ENCODE measurements at regions of chr6 and their contacts with region 1.

Region 1: GRCh38 chr6:26249957-26250697 is 114.9 kb upstream of the BTN3A2 start:
- DNase-seq: peak; percentile 88
- ATAC-seq: peak; percentile 67
- H3K4me3 ChIP-seq: peak overlapping the region; percentile 68 to 90 (median 83)
- H3K4me3 Mint-ChIP-seq: peak overlapping the region; percentile 97
- H3K27ac ChIP-seq: peak overlapping the region; percentile 73 to 74
- H3K27ac Mint-ChIP-seq: peak overlapping the region; percentile 97
- H3K4me1 ChIP-seq: peaks cover 8 to 16% of the 10 kb centered on the region in 2 donors
- H3K4me1 Mint-ChIP-seq: peaks cover 43% of the 10 kb centered on the region
- H3K27me3 ChIP-seq: no peaks in the 10 kb centered on the region
- H3K27me3 Mint-ChIP-seq: no peaks in the 10 kb centered on the region
- CTCF ChIP-seq: peak; percentile 70

Region 2: DNA sequence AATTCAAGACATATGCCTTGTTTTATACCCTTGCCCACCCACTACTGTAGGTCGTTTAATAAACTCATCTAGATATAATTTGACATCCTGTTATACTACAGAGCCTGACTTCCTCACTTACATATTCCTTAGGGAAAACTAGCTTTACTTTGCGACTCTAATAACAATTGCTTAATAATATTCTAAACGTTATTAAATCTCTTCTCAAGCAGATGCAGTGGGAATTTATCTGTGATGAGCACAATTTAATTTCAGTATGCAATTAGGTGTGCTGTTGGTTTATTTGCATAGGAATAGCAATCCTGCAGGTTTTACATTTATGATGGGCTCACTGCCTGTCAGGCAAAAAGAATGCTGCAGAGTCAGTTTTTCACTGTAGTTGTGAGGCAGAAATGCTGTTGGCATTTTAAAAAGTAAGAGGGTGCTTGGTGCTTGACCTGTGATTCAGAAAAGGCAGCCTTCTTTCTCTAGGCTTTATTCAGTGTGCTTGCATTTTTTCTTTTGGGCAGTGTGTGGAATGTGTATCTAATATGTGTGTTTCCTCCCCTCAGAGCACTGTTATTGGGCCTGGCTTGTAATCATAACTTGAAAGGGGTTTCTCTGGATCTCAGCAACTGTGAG is 750.4 kb before region 1 on chr6:
- CTCF ChIA-PET with region 1: no interaction called
- POLR2A ChIA-PET with region 1: no interaction called
- intact Hi-C with region 1: no loop called
- DNase-seq: no peak
- ATAC-seq: no peak
- H3K4me3 ChIP-seq: no peak overlapping the region
- H3K4me3 Mint-ChIP-seq: no peak overlapping the region
- H3K27ac ChIP-seq: no peak overlapping the region
- H3K27ac Mint-ChIP-seq: no peak overlapping the region
- H3K4me1 ChIP-seq: no peaks in the 10 kb centered on the region
- H3K4me1 Mint-ChIP-seq: no peaks in the 10 kb centered on the region
- H3K27me3 ChIP-seq: no peaks in the 10 kb centered on the region
- H3K27me3 Mint-ChIP-seq: no peaks in the 10 kb centered on the region
- CTCF ChIP-seq: no peak

Region 3: GRCh38 chr6:26045065-26045927 is 204.8 kb before region 1 on chr6:
- CTCF ChIA-PET with region 1: no interaction called
- POLR2A ChIA-PET with region 1: interaction called, 11 read pairs
- intact Hi-C with region 1: no loop called
- DNase-seq: peak; percentile 90
- ATAC-seq: peak; percentile 58
- H3K4me3 ChIP-seq: peak overlapping the region; percentile 56 to 98 (median 69)
- H3K4me3 Mint-ChIP-seq: peak overlapping the region; percentile 87
- H3K27ac ChIP-seq: peak overlapping the region; percentile 85 to 89
- H3K27ac Mint-ChIP-seq: peak overlapping the region; percentile 99
- H3K4me1 ChIP-seq: peaks cover 14 to 29% of the 10 kb centered on the region in 2 donors
- H3K4me1 Mint-ChIP-seq: peaks cover 17% of the 10 kb centered on the region
- H3K27me3 ChIP-seq: no peaks in the 10 kb centered on the region
- H3K27me3 Mint-ChIP-seq: no peaks in the 10 kb centered on the region
- CTCF ChIP-seq: no peak

Region 4: DNA sequence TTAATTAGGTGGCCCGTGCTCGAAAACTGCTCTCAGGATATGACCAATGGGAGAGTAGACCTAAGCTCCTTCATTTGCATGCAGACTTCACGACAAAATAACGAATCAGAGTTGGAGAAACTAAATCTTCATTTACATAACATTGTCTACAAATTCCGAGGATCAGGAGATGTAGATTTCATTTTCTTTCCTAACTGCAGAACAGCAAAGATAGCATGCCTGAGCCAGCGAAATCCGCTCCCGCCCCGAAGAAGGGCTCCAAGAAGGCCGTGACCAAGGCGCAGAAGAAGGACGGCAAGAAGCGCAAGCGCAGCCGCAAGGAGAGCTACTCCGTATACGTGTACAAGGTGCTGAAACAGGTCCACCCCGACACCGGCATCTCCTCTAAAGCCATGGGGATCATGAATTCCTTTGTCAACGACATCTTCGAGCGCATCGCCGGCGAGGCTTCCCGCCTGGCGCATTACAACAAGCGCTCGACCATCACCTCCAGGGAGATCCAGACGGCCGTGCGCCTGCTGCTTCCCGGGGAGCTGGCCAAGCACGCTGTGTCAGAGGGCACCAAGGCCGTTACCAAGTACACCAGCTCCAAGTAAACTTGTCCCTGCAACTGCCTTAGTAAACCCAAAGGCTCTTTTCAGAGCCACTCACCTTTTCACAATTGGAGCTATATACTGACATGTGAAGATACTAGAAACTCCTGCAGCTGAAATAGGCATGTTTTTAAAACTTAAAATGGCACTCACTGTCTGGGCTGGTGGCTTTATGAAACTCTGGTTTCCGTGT is 66.4 kb before region 1 on chr6:
- CTCF ChIA-PET with region 1: interaction called, 4 read pairs
- POLR2A ChIA-PET with region 1: interaction called, 15 read pairs
- intact Hi-C with region 1: no loop called
- DNase-seq: peak; percentile 84
- ATAC-seq: peak; percentile 89
- H3K4me3 ChIP-seq: peak overlapping the region; percentile 51 to 73 (median 71)
- H3K4me3 Mint-ChIP-seq: peak overlapping the region; percentile 91
- H3K27ac ChIP-seq: peak overlapping the region in 1 of 2 donors; percentile 61
- H3K27ac Mint-ChIP-seq: peak overlapping the region; percentile 85
- H3K4me1 ChIP-seq: peaks cover 13 to 22% of the 10 kb centered on the region in 2 donors
- H3K4me1 Mint-ChIP-seq: peaks cover 25% of the 10 kb centered on the region
- H3K27me3 ChIP-seq: no peaks in the 10 kb centered on the region
- H3K27me3 Mint-ChIP-seq: no peaks in the 10 kb centered on the region
- CTCF ChIP-seq: no peak

Region 5: GRCh38 chr6:26204332-26205165 is 45.6 kb before region 1 on chr6:
- CTCF ChIA-PET with region 1: interaction called, 20 read pairs
- POLR2A ChIA-PET with region 1: interaction called, 49 read pairs
- intact Hi-C with region 1: loop called (anchors 2 kb)
- DNase-seq: peak; percentile 96
- ATAC-seq: peak; percentile 65
- H3K4me3 ChIP-seq: peak overlapping the region; percentile 76 to 94 (median 81)
- H3K4me3 Mint-ChIP-seq: no peak overlapping the region
- H3K27ac ChIP-seq: peak overlapping the region; percentile 88 to 96
- H3K27ac Mint-ChIP-seq: no peak overlapping the region
- H3K4me1 ChIP-seq: peaks cover 26 to 38% of the 10 kb centered on the region in 2 donors
- H3K4me1 Mint-ChIP-seq: peaks cover 30% of the 10 kb centered on the region
- H3K27me3 ChIP-seq: no peaks in the 10 kb centered on the region
- H3K27me3 Mint-ChIP-seq: no peaks in the 10 kb centered on the region
- CTCF ChIP-seq: no peak

Region 6: DNA sequence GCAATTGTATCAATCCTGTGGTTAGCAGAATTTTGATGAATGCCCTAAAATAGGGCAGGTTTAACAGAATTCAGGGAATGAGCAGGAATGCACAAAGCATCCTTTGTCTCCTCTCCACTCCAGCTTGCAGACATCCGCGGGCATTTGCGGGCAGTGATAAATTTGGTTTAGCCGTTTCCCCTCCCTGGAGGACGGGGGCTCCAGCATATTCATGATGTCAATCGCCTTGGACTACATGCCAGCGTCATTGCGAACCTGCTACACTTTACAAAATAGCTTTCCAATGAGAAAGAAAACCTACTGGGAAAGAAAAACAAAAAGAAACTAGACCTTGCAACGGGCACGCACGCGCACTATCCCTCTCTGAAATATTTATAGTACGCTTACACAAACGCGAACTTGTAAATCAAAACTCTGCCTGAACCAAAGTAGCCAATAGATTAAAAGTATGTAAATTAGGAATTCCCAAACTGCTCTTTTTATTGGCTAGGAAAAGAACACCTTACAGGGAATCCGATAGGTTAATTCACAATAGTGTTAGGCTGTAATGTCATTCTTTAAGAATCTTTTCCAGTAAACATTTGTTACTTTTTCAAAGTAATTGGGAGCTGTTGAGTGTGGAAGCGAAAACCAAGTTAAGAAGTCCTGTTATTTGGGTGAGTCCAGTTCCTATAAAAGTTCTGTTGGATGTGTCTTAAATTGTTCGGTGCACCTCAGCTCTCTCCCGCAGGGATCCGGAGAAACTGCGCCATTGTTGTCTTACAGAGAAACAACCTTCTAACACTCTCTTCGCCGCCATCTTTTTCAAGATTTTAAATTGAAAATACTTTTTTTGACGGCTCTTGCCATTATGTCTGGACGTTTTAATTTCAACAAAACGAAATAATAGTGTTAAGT is 26.2 kb before region 1 on chr6:
- CTCF ChIA-PET with region 1: interaction called, 8 read pairs
- POLR2A ChIA-PET with region 1: interaction called, 14 read pairs
- intact Hi-C with region 1: no loop called
- DNase-seq: peak; percentile 81
- ATAC-seq: peak; percentile 87
- H3K4me3 ChIP-seq: peak overlapping the region; percentile 56 to 97 (median 75)
- H3K4me3 Mint-ChIP-seq: no peak overlapping the region
- H3K27ac ChIP-seq: peak overlapping the region; percentile 85 to 95
- H3K27ac Mint-ChIP-seq: no peak overlapping the region
- H3K4me1 ChIP-seq: peaks cover 4 to 14% of the 10 kb centered on the region in 2 donors
- H3K4me1 Mint-ChIP-seq: peaks cover 8% of the 10 kb centered on the region
- H3K27me3 ChIP-seq: no peaks in the 10 kb centered on the region
- H3K27me3 Mint-ChIP-seq: no peaks in the 10 kb centered on the region
- CTCF ChIP-seq: no peak

Region 7: GRCh38 chr6:26234421-26235296 is 15.5 kb before region 1 on chr6:
- CTCF ChIA-PET with region 1: interaction called, 23 read pairs
- POLR2A ChIA-PET with region 1: interaction called, 50 read pairs
- intact Hi-C with region 1: loop called (anchors 1 kb)
- DNase-seq: peak; percentile 87
- ATAC-seq: peak; percentile 76
- H3K4me3 ChIP-seq: peak overlapping the region; percentile 70 to 99 (median 85)
- H3K4me3 Mint-ChIP-seq: peak overlapping the region; percentile 93
- H3K27ac ChIP-seq: peak overlapping the region; percentile 86 to 90
- H3K27ac Mint-ChIP-seq: peak overlapping the region; percentile 95
- H3K4me1 ChIP-seq: peaks cover 13 to 21% of the 10 kb centered on the region in 2 donors
- H3K4me1 Mint-ChIP-seq: peaks cover 23% of the 10 kb centered on the region
- H3K27me3 ChIP-seq: no peaks in the 10 kb centered on the region
- H3K27me3 Mint-ChIP-seq: no peaks in the 10 kb centered on the region
- CTCF ChIP-seq: no peak

Region 8: DNA sequence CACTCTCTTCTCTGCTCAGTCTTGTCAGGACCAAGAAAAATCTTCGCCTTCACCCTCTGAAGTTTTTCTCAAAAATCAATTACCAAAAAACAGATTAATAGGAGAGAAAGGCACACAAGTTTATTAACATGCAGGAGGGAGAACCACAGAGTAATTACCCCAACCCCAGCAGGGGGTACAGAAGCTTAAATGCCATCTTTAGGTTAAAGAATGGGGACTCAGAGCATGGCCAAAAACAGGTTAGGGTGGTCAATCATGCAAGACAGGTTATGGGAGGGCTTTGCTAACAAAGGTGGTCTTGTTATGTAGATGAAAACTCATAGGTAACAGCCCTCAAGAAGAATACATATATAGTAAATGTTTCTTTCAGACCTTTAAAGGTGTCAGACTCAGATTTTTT is 14.4 kb after region 1 on chr6:
- CTCF ChIA-PET with region 1: interaction called, 10 read pairs
- POLR2A ChIA-PET with region 1: interaction called, 3 read pairs
- intact Hi-C with region 1: no loop called
- DNase-seq: no peak
- ATAC-seq: no peak
- H3K4me3 ChIP-seq: no peak overlapping the region
- H3K4me3 Mint-ChIP-seq: no peak overlapping the region
- H3K27ac ChIP-seq: no peak overlapping the region
- H3K27ac Mint-ChIP-seq: no peak overlapping the region
- H3K4me1 ChIP-seq: no peaks in the 10 kb centered on the region
- H3K4me1 Mint-ChIP-seq: no peaks in the 10 kb centered on the region
- H3K27me3 ChIP-seq: no peaks in the 10 kb centered on the region
- H3K27me3 Mint-ChIP-seq: no peaks in the 10 kb centered on the region
- CTCF ChIP-seq: no peak

Region 9: GRCh38 chr6:26531897-26532296 is 281.8 kb after region 1 on chr6:
- CTCF ChIA-PET with region 1: no interaction called
- POLR2A ChIA-PET with region 1: no interaction called
- intact Hi-C with region 1: no loop called
- DNase-seq: peak; percentile 46
- ATAC-seq: no peak
- H3K4me3 ChIP-seq: no peak overlapping the region
- H3K4me3 Mint-ChIP-seq: peak overlapping the region; percentile 99
- H3K27ac ChIP-seq: peak overlapping the region; percentile 45 to 78
- H3K27ac Mint-ChIP-seq: peak overlapping the region; percentile 97
- H3K4me1 ChIP-seq: peaks cover 22 to 26% of the 10 kb centered on the region in 2 donors
- H3K4me1 Mint-ChIP-seq: peaks cover 42% of the 10 kb centered on the region
- H3K27me3 ChIP-seq: no peaks in the 10 kb centered on the region
- H3K27me3 Mint-ChIP-seq: no peaks in the 10 kb centered on the region
- CTCF ChIP-seq: no peak